ENCODE measurements at regions of chr10 and their contacts with region 1.

Region 1: DNA sequence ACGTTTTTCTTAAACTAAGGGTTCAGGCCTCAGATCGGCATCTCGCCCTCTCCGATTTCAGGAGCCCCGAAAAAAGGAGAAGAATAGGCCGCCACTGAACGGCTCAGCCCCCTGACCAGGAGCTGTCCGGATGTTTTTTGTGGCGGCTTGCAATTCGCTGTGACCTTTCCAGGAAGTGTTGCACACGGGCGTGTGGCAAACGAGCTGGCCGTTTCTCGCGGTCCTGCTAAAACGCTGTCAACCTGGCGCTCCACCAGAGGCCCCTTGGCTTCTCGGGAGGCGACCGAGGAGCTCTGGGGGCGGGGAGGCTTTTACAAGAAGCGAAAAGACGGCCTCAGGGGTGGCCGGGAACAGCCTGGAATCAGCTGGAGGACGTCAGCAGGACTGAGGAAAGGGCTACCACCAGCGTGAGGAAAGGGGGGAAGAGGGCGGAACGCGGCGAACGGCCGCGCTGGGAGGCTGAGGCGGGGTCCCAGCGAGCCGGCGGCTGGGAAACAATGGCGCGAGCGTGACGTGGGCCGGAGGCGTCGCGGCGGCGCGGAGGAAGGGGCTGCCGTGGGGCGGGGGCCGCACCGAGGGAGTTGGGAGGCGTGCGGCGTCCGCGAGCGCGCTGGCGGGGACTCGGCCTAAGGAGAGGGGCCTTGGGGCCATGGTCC is 493 bp downstream of the NT5C2 start:
- DNase-seq: peak; percentile 76
- H3K4me3 Mint-ChIP-seq: peak overlapping the region; percentile 98
- H3K27ac Mint-ChIP-seq: peak overlapping the region; percentile 94
- H3K4me1 Mint-ChIP-seq: peaks cover 38% of the 10 kb centered on the region
- H3K27me3 Mint-ChIP-seq: no peaks in the 10 kb centered on the region
- CTCF ChIP-seq: no peak

Region 2: DNA sequence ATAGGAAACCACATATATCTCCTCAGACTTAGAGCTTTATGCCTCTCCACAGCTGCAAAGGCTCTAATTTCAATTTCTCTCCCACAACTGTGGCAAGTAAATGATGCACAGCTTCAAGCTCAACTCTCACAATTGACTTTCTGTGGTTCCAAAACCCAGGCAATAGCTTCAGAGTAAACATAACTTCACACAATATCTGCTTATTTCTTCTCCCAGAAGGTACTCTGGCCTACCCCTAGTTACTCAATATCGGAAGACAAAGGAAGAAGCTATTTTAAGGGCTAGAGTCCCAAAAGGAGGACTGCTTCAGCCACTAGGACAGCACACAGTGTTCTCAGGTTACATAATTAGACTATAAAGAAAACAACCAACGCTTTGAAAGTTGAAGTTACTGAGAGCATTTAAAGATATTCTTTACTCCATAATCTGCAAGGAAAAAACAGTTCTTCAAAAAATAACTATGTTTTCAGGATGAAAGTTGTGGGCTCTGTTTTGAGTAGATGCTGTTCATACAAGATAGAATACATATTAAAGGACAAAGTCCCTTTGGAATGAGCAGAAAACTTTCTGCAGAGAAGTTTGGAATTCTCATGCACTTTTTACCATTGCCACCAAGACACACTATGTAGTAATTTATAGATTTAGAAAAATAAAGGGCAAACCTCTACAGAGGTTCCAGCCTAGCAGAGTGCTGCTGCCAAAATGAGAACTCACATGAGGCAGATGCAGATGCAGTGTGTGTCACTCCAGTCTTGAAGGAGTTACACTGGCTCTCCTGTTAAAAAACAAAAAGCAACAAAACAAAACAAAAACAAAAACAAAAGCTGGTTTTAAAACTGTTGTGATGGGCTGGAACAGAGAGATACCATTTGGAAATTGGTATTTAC is 81.3 kb before region 1 on chr10:
- CTCF ChIA-PET with region 1: no interaction called
- POLR2A ChIA-PET with region 1: interaction called, 13 read pairs
- intact Hi-C with region 1: no loop called
- DNase-seq: peak; percentile 59
- H3K4me3 Mint-ChIP-seq: no peak overlapping the region
- H3K27ac Mint-ChIP-seq: no peak overlapping the region
- H3K4me1 Mint-ChIP-seq: peaks cover 13% of the 10 kb centered on the region
- H3K27me3 Mint-ChIP-seq: no peaks in the 10 kb centered on the region
- CTCF ChIP-seq: no peak

Region 3: GRCh38 chr10:103153302-103154197 is 39.0 kb before region 1 on chr10:
- CTCF ChIA-PET with region 1: interaction called, 3 read pairs
- POLR2A ChIA-PET with region 1: interaction called, 48 read pairs
- intact Hi-C with region 1: no loop called
- DNase-seq: peak; percentile 38
- H3K4me3 Mint-ChIP-seq: peak overlapping the region; percentile 58
- H3K27ac Mint-ChIP-seq: peak overlapping the region; percentile 82
- H3K4me1 Mint-ChIP-seq: peaks cover 18% of the 10 kb centered on the region
- H3K27me3 Mint-ChIP-seq: no peaks in the 10 kb centered on the region
- CTCF ChIP-seq: no peak

Region 4: GRCh38 chr10:103168486-103169311 is 23.9 kb before region 1 on chr10:
- CTCF ChIA-PET with region 1: no interaction called
- POLR2A ChIA-PET with region 1: interaction called, 49 read pairs
- intact Hi-C with region 1: no loop called
- DNase-seq: peak; percentile 50
- H3K4me3 Mint-ChIP-seq: no peak overlapping the region
- H3K27ac Mint-ChIP-seq: peak overlapping the region; percentile 81
- H3K4me1 Mint-ChIP-seq: no peaks in the 10 kb centered on the region
- H3K27me3 Mint-ChIP-seq: no peaks in the 10 kb centered on the region
- CTCF ChIP-seq: no peak

Region 5: GRCh38 chr10:103231047-103231551 is 38.5 kb after region 1 on chr10:
- CTCF ChIA-PET with region 1: interaction called, 4 read pairs
- POLR2A ChIA-PET with region 1: interaction called, 26 read pairs
- intact Hi-C with region 1: no loop called
- DNase-seq: peak; percentile 79
- H3K4me3 Mint-ChIP-seq: no peak overlapping the region
- H3K27ac Mint-ChIP-seq: no peak overlapping the region
- H3K4me1 Mint-ChIP-seq: peaks cover 17% of the 10 kb centered on the region
- H3K27me3 Mint-ChIP-seq: no peaks in the 10 kb centered on the region
- CTCF ChIP-seq: no peak

Region 6: DNA sequence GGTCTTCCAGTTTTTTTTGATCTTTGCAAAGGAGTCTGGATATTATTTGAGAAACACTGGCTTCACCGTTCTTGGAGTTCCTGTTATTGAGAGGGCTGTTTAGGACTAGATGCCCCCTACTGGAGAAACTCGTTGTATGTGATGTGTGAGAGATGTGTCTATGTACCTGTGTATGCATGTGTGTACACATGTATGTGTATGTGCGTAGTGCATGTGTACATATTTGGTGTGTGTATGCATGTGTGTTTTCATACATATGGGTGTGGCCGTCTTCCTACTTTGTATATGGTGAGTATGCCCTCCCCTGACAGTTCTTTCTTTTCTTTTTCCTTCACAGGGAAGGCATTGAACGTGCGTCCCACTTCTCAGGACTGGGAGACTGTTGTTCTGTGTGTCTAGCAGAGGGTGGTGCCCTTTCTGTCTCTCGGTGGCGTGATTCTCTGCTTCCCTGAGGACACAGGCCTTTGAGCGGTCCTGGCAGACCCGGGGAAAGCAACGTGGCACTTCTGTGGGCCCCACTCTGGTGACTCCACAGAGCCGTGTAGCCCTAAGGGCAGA is 289.5 kb after region 1 on chr10:
- CTCF ChIA-PET with region 1: no interaction called
- POLR2A ChIA-PET with region 1: no interaction called
- intact Hi-C with region 1: no loop called
- DNase-seq: peak; percentile 78
- H3K4me3 Mint-ChIP-seq: no peak overlapping the region
- H3K27ac Mint-ChIP-seq: no peak overlapping the region
- H3K4me1 Mint-ChIP-seq: peaks cover 9% of the 10 kb centered on the region
- H3K27me3 Mint-ChIP-seq: no peaks in the 10 kb centered on the region
- CTCF ChIP-seq: peak; percentile 46

Region 7: GRCh38 chr10:104028146-104028545 is 835.6 kb after region 1 on chr10:
- CTCF ChIA-PET with region 1: no interaction called
- POLR2A ChIA-PET with region 1: no interaction called
- intact Hi-C with region 1: no loop called
- DNase-seq: peak; percentile 20
- H3K4me3 Mint-ChIP-seq: no peak overlapping the region
- H3K27ac Mint-ChIP-seq: peak overlapping the region; percentile 75
- H3K4me1 Mint-ChIP-seq: no peaks in the 10 kb centered on the region
- H3K27me3 Mint-ChIP-seq: no peaks in the 10 kb centered on the region
- CTCF ChIP-seq: peak; percentile 20